Naive thymus-derived CD4-positive, alpha-beta T cell (primary cell): ENCODE measurements at regions of chr6 and their contacts with region 1.

Region 1: DNA sequence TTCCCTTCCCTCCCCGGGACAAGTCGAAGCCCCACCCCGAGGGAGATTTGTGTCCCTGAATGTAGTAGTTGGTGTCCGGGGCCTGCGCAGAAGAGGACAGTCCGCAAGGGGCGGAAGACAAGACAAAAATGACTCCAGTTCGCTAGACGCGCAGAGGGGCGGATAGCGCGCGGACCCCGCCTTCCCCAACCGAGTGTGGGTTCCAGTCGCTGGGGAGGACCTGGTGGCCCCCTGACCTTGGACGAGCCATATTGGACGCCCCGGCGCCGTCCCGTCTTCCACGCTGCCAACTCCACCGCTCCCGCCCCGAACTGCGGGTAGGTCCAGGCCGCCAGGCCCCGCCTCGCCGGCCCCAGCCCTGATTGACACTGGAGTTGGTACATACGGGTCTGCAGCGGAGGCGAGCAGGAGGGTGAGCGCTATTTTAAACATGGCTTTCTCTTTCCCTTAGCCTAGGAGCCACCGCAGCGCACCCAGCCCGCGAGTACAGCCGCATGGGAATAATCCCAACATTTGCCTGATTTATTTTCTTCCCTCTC is 802 bp downstream of the HMGN3 start:
- DNase-seq: peak; percentile 34 to 77 (median 54)
- ATAC-seq: peak; percentile 63
- H3K4me3 ChIP-seq: peak overlapping the region; percentile 89
- H3K4me3 Mint-ChIP-seq: peak overlapping the region; percentile 92 to 100 (median 98)
- H3K27ac ChIP-seq: peak overlapping the region; percentile 62
- H3K27ac Mint-ChIP-seq: peak overlapping the region; percentile 64 to 96 (median 90)
- H3K4me1 ChIP-seq: peaks cover 4 to 8% of the 10 kb centered on the region in 2 donors
- H3K4me1 Mint-ChIP-seq: peaks cover 9 to 42% (median 30%) of the 10 kb centered on the region in 7 donors
- H3K27me3 ChIP-seq: no peaks in the 10 kb centered on the region
- H3K27me3 Mint-ChIP-seq: no peaks in the 10 kb centered on the region

Region 2: DNA sequence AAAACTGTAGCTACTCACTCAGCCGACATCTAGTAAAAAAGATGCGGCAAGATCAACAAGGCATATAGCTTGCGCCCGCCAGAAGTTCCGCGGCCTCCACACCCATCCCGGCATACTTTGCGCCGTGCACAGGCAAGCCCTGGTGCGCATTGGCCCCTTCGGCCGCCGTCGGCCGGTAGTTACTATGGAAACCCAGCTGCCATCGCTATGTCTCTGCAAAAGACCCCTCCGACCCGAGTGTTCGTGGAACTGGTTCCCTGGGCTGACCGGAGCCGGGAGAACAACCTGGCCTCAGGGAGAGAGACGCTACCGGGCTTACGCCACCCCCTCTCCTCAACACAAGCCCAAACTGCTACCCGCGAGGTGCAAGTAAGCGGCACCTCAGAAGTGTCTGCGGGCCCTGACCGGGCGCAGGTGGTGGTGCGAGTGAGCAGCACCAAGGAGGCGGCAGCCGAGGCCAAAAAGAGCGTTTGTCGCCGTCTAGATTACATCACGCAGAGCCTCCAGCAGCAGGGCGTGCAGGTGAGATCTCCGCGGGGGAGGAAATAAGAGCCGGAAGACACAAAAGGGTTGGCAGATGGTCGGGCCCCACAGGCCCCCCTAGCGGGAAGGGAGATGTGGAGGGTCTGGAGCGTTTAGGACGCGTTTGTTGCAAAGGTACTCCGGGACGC is 366.2 kb before region 1 on chr6 and contains the start of gene IRAK1BP1:
- CTCF ChIA-PET with region 1: no interaction called
- POLR2A ChIA-PET with region 1: no interaction called
- intact Hi-C with region 1: loop called (anchors 1 to 2 kb)
- DNase-seq: peak; percentile 39 to 79 (median 76)
- ATAC-seq: peak; percentile 94
- H3K4me3 ChIP-seq: peak within 1 kb of the TSS; percentile 85
- H3K4me3 Mint-ChIP-seq: peak within 1 kb of the TSS; percentile 91 to 100 (median 98)
- H3K27ac ChIP-seq: peak within 1 kb of the TSS; percentile 68
- H3K27ac Mint-ChIP-seq: peak within 1 kb of the TSS; percentile 87 to 97 (median 96)
- H3K4me1 ChIP-seq: peaks cover 0 to 5% of the 10 kb centered on the region in 2 donors
- H3K4me1 Mint-ChIP-seq: peaks cover 6 to 33% (median 27%) of the 10 kb centered on the region in 7 donors
- H3K27me3 ChIP-seq: no peaks in the 10 kb centered on the region
- H3K27me3 Mint-ChIP-seq: no peaks in the 10 kb centered on the region
- total RNA-seq, gene IRAK1BP1: 0.71 to 3.6 (median 3.1) TPM